SK-N-SH (cell line): ENCODE measurements at regions of chr7 and their contacts with region 1.

Region 1: DNA sequence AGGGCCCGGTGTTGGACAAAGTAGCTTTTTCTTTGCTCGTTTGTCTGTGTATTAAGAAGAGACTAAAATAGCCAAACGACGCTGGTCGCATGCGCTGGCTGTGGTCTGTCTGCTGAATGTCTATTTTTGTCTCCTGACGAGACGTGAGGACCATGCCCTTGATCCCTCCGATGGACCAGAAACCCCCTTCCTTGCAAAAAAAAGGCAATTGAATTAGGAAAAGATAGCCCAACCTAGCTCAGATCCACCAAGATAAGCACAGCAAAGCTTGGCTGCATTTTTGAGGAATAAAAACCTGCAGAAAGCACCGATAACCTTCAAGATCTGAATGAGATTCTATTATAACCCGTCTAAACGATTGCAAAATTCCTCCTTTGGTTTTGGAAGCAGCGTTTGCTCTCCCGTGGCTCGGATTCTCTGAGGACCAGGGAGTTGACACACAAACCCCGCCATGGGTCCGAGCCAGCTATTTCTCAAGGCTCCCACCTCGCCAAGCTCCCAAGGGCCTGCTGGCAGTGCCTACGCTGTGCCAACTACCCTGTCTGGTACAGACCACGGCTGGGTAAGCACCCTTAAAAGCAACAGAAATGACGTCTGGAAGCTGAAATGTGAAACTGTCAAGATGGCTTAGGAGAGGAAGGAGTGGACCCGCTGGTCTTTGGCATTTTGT is 17.7 kb upstream of the TTYH3 start:
- DNase-seq: peak; percentile 77
- H3K4me3 ChIP-seq: no peak overlapping the region
- H3K27ac ChIP-seq: peak overlapping the region in 1 of 2 experiments; percentile 40; a peak in 2 of 4 replicates
- H3K4me1 ChIP-seq: peaks cover 0 to 46% of the 10 kb centered on the region in 2 experiments; a peak in 3 of 4 replicates
- H3K27me3 ChIP-seq: no peaks in the 10 kb centered on the region
- CTCF ChIP-seq: no peak
- EP300 ChIP-seq: no peak
- RAD21 ChIP-seq: no peak

Region 2: GRCh38 chr7:2602406-2603043 is 11.5 kb before region 1 on chr7:
- CTCF ChIA-PET with region 1: interaction called, 16 read pairs
- POLR2A ChIA-PET with region 1: interaction called, 3 read pairs
- DNase-seq: peak; percentile 45
- H3K4me3 ChIP-seq: no peak overlapping the region
- H3K27ac ChIP-seq: no peak overlapping the region
- H3K4me1 ChIP-seq: no peaks in the 10 kb centered on the region; a peak in 1 of 4 replicates
- H3K27me3 ChIP-seq: no peaks in the 10 kb centered on the region
- CTCF ChIP-seq: no peak
- EP300 ChIP-seq: no peak
- RAD21 ChIP-seq: no peak; the same call in 1 of the 2 replicates